HepG2 (cell line): ENCODE measurements at regions of chr12 and their contacts with region 1.

Region 1: GRCh38 chr12:109134186-109134917 is 18.0 kb downstream of the ACACB start:
- DNase-seq: no peak
- ATAC-seq: peak; percentile 92
- H3K4me3 ChIP-seq: no peak overlapping the region
- H3K27ac ChIP-seq: no peak overlapping the region
- H3K4me1 ChIP-seq: no peaks in the 10 kb centered on the region
- H3K27me3 ChIP-seq: no peaks in the 10 kb centered on the region
- CTCF ChIP-seq: peak; percentile 71
- EP300 ChIP-seq: no peak
- POLR2A ChIP-seq: no peak
- RAD21 ChIP-seq: peak; percentile 76

Region 2: DNA sequence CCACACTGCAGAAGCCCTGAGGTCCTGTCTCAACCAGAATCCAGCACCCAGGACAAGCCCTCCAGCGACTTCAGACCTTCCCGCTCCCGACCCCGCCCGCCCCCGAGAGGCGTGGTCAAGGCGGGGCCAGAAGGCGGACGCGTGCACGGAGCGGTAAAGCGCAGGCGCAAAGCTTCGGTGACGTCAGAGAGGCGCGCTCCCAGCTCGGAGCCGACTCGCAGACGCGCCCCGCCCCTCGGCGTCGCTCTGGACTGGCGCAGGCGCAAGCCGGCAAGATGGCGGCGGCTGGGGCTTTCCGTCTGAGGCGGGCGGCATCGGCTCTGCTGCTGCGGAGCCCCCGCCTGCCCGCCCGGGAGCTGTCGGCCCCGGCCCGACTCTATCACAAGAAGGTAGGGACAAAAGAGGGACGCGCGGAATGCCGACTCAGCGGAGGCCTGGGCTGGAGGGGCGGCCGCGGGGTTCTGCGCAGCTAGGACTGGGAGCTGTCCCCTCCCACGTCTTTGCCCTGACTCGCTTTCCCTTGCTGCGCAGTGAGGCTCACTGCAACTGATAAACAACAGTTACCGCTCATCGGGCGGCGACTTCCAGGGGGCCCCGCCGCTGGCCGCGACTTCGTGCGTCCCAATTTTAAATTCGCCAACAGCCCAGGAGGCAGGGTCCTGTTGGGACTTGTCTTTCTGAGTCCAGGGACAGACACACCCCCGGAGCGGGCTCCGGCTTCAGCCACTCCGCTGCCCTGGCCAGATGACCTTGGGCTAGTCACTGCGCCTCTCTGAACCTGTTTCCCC is 571.8 kb before region 1 on chr12 and contains the start of gene ISCU:
- CTCF ChIA-PET with region 1: no interaction called
- POLR2A ChIA-PET with region 1: no interaction called
- in situ Hi-C with region 1: no loop called
- intact Hi-C with region 1: no loop called
- DNase-seq: peak; percentile 93
- ATAC-seq: peak; percentile 83
- H3K4me3 ChIP-seq: peak within 1 kb of the TSS; percentile 96 to 100 (median 99)
- H3K27ac ChIP-seq: peak within 1 kb of the TSS; percentile 97
- H3K4me1 ChIP-seq: peaks cover 30% of the 10 kb centered on the region
- H3K27me3 ChIP-seq: no peaks in the 10 kb centered on the region; a peak in 1 of 5 replicates
- CTCF ChIP-seq: no peak; the same call in 1 of the 2 replicates
- EP300 ChIP-seq: no peak
- POLR2A ChIP-seq: peak; percentile 63 to 78
- RAD21 ChIP-seq: peak; percentile 31; the same call in 1 of the 2 replicates
- total RNA-seq, gene ISCU: 107 and 131 TPM in 2 replicates

Region 3: DNA sequence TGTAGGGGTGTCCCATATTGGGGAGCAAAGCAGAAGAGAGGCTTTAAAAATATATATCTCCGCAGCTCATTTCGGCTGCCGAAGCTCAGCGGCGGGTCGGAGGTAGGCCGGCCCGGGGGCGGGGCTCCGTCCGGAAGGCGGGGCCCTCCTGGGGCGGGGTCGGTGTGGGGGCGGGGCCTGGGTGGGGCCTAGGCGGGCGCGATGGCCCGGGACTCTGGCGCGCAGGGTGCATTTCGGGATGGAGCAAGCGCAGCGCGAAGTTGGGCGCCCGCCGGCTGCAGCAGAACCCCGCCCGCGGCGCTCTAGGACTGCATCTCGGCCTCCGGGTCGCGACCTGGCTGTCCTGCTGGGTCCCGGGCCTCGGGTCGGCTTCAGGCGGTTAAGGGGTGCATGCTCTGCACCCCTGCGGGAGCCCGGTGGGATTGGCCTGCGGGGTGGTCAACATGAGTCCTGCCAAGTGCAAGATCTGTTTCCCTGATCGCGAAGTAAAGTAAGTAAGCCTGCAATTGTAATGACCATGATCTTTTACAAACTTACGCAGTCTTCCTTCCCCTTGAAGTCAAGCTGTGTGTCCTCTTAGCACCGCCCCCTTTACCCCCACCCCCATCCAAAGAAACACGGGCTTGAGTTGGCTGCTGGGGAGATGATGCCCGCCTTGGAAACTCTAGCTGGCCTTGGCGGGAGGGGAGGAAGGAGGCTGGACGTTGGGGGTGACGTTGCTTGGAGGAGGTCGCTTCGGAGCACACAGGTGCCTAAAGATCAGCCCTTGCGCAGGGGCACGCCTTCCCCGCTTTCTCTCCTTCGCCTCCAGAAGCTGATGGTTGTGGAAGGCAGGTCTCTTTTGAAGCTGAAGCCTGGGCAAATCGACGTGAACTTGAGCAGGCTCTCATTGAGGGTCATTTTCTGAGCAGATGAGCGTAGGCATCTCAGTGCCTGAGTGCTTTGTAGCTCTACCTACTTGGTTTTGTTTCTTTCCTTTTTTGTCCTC is 20.4 kb after region 1 on chr12:
- CTCF ChIA-PET with region 1: no interaction called
- POLR2A ChIA-PET with region 1: interaction called, 13 read pairs
- in situ Hi-C with region 1: no loop called
- intact Hi-C with region 1: no loop called
- DNase-seq: peak; percentile 51
- ATAC-seq: peak; percentile 96
- H3K4me3 ChIP-seq: peak overlapping the region; percentile 62 to 77 (median 75)
- H3K27ac ChIP-seq: peak overlapping the region; percentile 64
- H3K4me1 ChIP-seq: peaks cover 33% of the 10 kb centered on the region
- H3K27me3 ChIP-seq: no peaks in the 10 kb centered on the region
- CTCF ChIP-seq: peak; percentile 36; the same call in 1 of the 2 replicates
- EP300 ChIP-seq: no peak
- POLR2A ChIP-seq: peak in 1 of 2 experiments; percentile 68; a peak in 2 of 4 replicates
- RAD21 ChIP-seq: peak; percentile 65

Region 4: GRCh38 chr12:109247831-109248654 is 113.7 kb after region 1 on chr12:
- CTCF ChIA-PET with region 1: no interaction called
- POLR2A ChIA-PET with region 1: no interaction called
- in situ Hi-C with region 1: loop called (anchors 10 kb)
- intact Hi-C with region 1: no loop called
- DNase-seq: peak; percentile 75
- ATAC-seq: peak; percentile 90
- H3K4me3 ChIP-seq: no peak overlapping the region
- H3K27ac ChIP-seq: peak overlapping the region; percentile 60
- H3K4me1 ChIP-seq: peaks cover 23% of the 10 kb centered on the region
- H3K27me3 ChIP-seq: no peaks in the 10 kb centered on the region
- CTCF ChIP-seq: no peak
- EP300 ChIP-seq: peak in 1 of 2 experiments; percentile 43; a peak in 1 of 4 replicates
- POLR2A ChIP-seq: no peak
- RAD21 ChIP-seq: no peak

Region 5: DNA sequence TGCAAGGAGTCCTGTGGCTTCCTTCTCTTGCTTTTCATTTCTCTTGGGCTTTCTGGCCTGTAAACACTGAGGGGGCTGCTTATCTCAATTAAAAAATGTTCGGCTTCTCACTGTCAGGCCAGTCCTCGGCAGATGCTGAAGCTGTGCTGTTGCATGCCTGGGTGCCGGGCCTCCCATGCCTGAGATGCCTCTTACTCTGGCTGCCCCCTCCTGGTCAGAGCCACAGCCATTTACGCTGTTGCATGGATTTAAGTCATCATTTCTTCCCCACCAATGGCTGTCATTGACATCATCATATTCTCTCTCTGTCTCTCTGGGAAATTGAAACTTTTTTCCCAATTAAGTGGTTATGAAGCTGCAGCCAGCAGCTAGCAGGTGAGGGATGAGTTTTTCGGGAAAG is 121.0 kb after region 1 on chr12:
- CTCF ChIA-PET with region 1: no interaction called
- POLR2A ChIA-PET with region 1: no interaction called
- in situ Hi-C with region 1: no loop called
- intact Hi-C with region 1: loop called (anchors 2 kb)
- DNase-seq: peak; percentile 24
- ATAC-seq: peak; percentile 85
- H3K4me3 ChIP-seq: no peak overlapping the region
- H3K27ac ChIP-seq: no peak overlapping the region
- H3K4me1 ChIP-seq: no peaks in the 10 kb centered on the region
- H3K27me3 ChIP-seq: no peaks in the 10 kb centered on the region
- CTCF ChIP-seq: peak; percentile 63
- EP300 ChIP-seq: no peak
- POLR2A ChIP-seq: no peak
- RAD21 ChIP-seq: peak; percentile 57; the same call in 1 of the 2 replicates

Region 6: DNA sequence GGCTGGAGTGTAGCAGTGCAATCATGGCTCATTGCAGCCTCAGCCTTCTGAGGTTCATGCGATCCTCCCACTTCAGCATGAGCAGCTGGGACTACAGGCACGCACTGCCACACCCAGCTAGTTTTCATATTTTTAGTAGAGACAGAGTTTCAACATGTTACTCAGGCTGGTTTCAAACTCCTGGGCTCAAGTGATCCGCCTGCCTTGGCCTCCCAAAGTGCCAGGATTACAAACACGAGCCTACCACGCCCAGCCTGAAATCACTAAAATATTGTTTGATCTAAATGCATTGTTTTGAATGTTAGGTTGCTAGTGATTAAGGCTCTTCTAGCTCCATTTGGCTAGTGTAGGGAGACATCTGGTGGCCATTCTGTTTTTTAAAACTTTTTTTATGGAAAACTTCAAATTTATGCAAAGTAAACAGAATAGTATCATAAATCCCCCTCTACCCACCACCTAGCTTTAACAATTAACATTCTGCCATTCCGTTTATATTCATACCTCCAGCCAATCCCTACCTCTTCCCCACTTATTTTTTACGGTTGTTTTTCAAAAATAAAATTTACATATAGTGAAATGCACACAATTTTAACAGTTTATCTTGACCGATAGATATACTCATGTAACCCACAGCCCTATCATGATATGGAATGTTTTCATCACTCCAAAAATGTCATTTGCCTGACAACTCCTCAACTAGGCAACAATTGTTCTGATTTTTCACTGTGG is 251.2 kb after region 1 on chr12:
- CTCF ChIA-PET with region 1: interaction called, 8 read pairs
- POLR2A ChIA-PET with region 1: no interaction called
- in situ Hi-C with region 1: loop called (anchors 10 kb)
- intact Hi-C with region 1: loop called (anchors 1 kb)
- DNase-seq: peak; percentile 32
- ATAC-seq: peak; percentile 21; the same call in 2 of the 3 replicates
- H3K4me3 ChIP-seq: no peak overlapping the region
- H3K27ac ChIP-seq: no peak overlapping the region
- H3K4me1 ChIP-seq: peaks cover 16% of the 10 kb centered on the region
- H3K27me3 ChIP-seq: no peaks in the 10 kb centered on the region
- CTCF ChIP-seq: peak; percentile 63
- EP300 ChIP-seq: no peak
- POLR2A ChIP-seq: no peak
- RAD21 ChIP-seq: peak; percentile 66